ENCODE measurements at regions of chr21 and their contacts with region 1.

Region 1: GRCh38 chr21:45923146-45923545 is 58.4 kb upstream of the COL6A1 start:
- DNase-seq: peak; percentile 59 to 72 (median 67)
- H3K4me3 ChIP-seq: no peak overlapping the region
- H3K4me3 Mint-ChIP-seq: peak overlapping the region in 1 of 8 donors; percentile 61
- H3K27ac ChIP-seq: no peak overlapping the region
- H3K27ac Mint-ChIP-seq: peak overlapping the region in 1 of 7 donors; percentile 37
- H3K4me1 ChIP-seq: peaks cover 9% of the 10 kb centered on the region
- H3K4me1 Mint-ChIP-seq: peaks cover 5 to 17% (median 8%) of the 10 kb centered on the region in 4 donors
- H3K27me3 ChIP-seq: no peaks in the 10 kb centered on the region
- H3K27me3 Mint-ChIP-seq: no peaks in the 10 kb centered on the region

Region 2: GRCh38 chr21:45478115-45478801 is 444.9 kb before region 1 on chr21:
- CTCF ChIA-PET with region 1: interaction called, 3 read pairs
- POLR2A ChIA-PET with region 1: no interaction called
- intact Hi-C with region 1: loop called (anchors 10 kb)
- DNase-seq: peak; percentile 80 to 83 (median 81)
- H3K4me3 ChIP-seq: peak overlapping the region; percentile 57 to 66
- H3K4me3 Mint-ChIP-seq: peak overlapping the region; percentile 85 to 94 (median 90)
- H3K27ac ChIP-seq: peak overlapping the region; percentile 41
- H3K27ac Mint-ChIP-seq: peak overlapping the region; percentile 88 to 99 (median 97)
- H3K4me1 ChIP-seq: peaks cover 34% of the 10 kb centered on the region
- H3K4me1 Mint-ChIP-seq: peaks cover 23 to 37% (median 32%) of the 10 kb centered on the region in 4 donors
- H3K27me3 ChIP-seq: no peaks in the 10 kb centered on the region
- H3K27me3 Mint-ChIP-seq: no peaks in the 10 kb centered on the region

Region 3: GRCh38 chr21:45880097-45881068 is 42.8 kb before region 1 on chr21:
- CTCF ChIA-PET with region 1: interaction called, 14 read pairs
- POLR2A ChIA-PET with region 1: no interaction called
- intact Hi-C with region 1: loop called (anchors 1 kb)
- DNase-seq: peak; percentile 53 to 77 (median 67)
- H3K4me3 ChIP-seq: no peak overlapping the region
- H3K4me3 Mint-ChIP-seq: peak overlapping the region in 7 of 8 donors; percentile 12 to 82 (median 53)
- H3K27ac ChIP-seq: no peak overlapping the region
- H3K27ac Mint-ChIP-seq: peak overlapping the region in 4 of 7 donors; percentile 27 to 47 (median 39)
- H3K4me1 ChIP-seq: peaks cover 38% of the 10 kb centered on the region
- H3K4me1 Mint-ChIP-seq: peaks cover 37 to 65% (median 47%) of the 10 kb centered on the region in 4 donors
- H3K27me3 ChIP-seq: no peaks in the 10 kb centered on the region
- H3K27me3 Mint-ChIP-seq: no peaks in the 10 kb centered on the region

Region 4: DNA sequence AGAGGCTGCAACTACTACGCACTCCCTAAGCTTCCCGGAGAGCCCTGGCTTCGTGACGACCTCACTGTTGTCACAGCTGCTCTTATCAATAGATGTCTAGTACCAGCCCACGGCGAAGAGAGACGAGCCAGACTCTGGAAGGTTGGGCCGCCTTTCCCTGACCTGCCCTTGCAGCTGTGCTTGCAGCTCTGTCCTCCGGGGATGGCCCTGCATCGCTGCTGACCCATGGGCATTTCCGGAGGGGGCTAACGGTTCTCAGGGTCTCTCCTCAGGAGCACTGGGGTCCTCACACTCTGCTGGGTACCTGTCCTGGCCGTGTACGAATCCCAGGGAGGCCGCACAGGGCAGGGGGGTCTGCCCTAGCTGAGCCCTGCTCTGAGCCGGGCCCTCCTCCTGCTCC is 35.4 kb before region 1 on chr21:
- CTCF ChIA-PET with region 1: interaction called, 14 read pairs
- POLR2A ChIA-PET with region 1: no interaction called
- intact Hi-C with region 1: no loop called
- DNase-seq: no peak
- H3K4me3 ChIP-seq: no peak overlapping the region
- H3K4me3 Mint-ChIP-seq: peak overlapping the region in 3 of 8 donors; percentile 5 to 30 (median 15)
- H3K27ac ChIP-seq: no peak overlapping the region
- H3K27ac Mint-ChIP-seq: peak overlapping the region in 2 of 7 donors; percentile 30 to 79
- H3K4me1 ChIP-seq: peaks cover 89% of the 10 kb centered on the region
- H3K4me1 Mint-ChIP-seq: peaks cover 74 to 96% (median 84%) of the 10 kb centered on the region in 4 donors
- H3K27me3 ChIP-seq: no peaks in the 10 kb centered on the region
- H3K27me3 Mint-ChIP-seq: no peaks in the 10 kb centered on the region